AG04449 (cell line): ENCODE measurements at regions of chr19 and their contacts with region 1.

Region 1: DNA sequence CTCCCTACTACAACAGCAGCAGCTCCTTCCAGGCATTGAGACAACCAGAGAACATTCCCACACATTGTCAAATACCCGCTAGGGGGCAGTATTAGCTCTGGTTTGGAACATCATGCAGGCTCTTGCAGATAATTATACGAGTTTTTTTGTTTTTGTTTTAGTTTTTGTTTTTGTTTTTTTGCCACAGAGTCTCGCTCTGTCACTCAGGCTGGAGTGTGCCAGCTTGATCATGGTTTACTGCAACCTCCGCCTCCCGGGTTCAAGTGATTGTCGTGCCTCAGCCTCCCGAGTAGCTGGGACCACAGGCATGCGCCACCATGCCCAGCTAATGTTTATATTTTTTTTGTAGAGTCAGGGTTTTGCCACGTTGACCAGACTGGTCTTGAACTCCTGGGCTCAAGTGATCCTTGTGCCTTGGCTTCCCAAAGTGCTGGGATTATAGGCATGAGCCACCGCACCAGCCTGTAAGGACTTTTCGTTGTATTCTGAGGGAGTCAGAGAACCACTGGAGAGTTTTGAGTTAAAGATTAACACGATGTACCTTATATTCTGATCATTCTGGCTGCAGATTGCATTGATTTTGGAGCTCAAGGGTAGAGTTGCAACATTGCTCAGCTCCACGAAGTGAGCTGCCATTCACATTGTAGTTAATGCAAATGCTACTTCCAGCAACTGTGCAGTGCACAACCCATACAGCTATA is 41.7 kb upstream of the CEACAM20 start:
- DNase-seq: peak; percentile 34
- H3K4me3 ChIP-seq: no peak overlapping the region
- CTCF ChIP-seq: peak; percentile 54

Region 2: DNA sequence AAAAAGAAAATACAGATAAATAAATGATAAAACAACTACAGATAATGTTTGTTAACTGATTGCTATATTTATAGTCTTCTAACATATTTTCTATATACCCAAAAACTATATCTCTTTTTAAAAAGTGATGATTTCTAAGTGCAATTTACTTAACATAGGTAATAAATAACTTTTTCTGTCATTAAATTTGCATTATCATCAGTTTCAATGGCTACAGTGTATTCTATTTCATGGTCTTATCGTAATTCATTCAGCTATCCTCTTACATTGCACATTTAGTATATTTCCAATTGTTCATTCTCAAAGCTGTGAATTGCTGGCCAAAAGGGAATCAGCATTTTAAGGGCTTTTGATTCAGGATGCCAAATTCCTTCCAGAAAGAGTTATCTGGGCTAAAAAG is 74.4 kb before region 1 on chr19:
- CTCF ChIA-PET with region 1: no interaction called
- POLR2A ChIA-PET with region 1: no interaction called
- DNase-seq: no peak
- H3K4me3 ChIP-seq: no peak overlapping the region
- CTCF ChIP-seq: no peak

Region 3: DNA sequence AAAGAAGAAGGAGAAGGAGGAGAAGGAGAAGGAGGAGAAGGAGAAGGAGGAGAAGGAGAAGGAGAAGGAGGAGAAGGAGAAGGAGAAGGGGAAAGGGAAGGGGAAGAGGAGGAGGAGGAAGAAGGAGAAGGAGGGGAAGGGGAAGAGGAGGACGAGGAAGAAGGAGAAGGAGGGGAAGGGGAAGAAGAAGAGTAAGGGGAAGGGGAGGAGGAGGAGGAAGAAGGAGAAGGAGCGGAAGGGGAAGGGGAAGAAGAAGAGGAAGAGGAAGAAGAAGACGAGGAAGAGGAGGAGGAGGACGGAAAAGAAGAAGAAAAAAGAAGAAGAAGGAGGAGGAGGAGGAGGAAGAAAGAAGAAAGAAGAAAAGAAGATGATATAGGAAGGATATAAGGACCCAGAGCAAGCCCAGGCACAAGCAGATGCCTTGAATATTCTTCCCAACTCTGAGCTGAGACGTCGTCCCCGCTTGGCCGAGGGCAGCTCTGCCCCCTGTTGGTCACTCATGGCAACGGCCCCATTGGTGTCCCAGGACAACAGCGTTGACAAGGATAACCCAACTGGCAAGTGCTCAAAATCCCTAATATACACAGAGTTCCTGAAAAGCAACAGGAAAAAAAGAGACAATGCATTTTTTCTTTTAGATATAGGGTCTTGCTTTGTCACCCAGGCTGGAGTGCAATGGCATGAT is 11.6 kb after region 1 on chr19:
- CTCF ChIA-PET with region 1: interaction called, 49 read pairs
- POLR2A ChIA-PET with region 1: no interaction called
- DNase-seq: no peak
- H3K4me3 ChIP-seq: no peak overlapping the region
- CTCF ChIP-seq: peak; percentile 52

Region 4: DNA sequence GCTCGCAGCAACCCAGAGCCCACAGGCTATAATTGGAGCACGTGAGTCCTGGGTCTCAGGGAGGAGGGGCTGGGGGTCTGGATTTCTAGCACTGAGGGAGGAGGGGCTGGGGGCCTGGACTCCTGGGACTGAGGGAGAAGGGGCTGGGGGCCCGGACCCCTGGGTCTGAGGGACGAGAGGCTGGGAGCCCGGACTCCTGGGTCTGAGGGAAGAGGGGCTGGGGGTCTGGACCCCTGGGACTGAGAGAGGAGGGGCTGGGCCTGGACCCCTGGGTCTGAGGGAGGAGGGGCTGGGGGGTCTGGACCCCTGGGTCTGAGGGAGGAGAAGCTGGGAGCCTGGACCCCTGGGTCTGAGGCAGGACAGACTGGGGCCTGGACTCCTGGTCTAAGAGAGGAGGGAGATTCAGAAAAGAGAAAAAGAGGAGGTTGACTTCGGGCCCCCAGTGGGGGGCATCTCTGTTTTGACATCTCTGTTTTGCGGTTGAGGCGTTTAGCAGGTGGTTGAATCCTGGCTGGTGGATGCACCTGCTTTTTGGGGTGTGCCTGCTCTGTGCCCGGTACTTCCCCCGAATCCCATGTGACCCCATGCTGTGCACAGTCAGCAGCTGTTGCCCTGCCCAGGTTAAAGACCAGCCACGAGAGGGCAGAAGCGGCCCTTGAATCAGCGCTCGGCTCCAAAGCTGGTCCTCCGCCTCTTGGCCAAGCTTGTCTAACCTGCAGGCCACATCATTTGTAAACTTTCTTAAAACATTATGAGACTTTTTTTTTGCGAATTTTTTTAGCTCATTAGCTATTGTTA is 83.0 kb after region 1 on chr19:
- CTCF ChIA-PET with region 1: interaction called, 121 read pairs
- POLR2A ChIA-PET with region 1: interaction called, 3 read pairs
- DNase-seq: no peak
- H3K4me3 ChIP-seq: no peak overlapping the region
- CTCF ChIP-seq: peak; percentile 62

Region 5: GRCh38 chr19:44677019-44677821 is 106.1 kb after region 1 on chr19:
- CTCF ChIA-PET with region 1: interaction called, 11 read pairs
- POLR2A ChIA-PET with region 1: interaction called, 3 read pairs
- DNase-seq: peak; percentile 42
- H3K4me3 ChIP-seq: no peak overlapping the region
- CTCF ChIP-seq: no peak